ENCODE measurements at regions of chr22 and their contacts with region 1.

Region 1: GRCh38 chr22:44523981-44524759 is 26.1 kb upstream of the RTL6 start:
- DNase-seq: peak; percentile 20
- H3K4me3 ChIP-seq: no peak overlapping the region
- CTCF ChIP-seq: no peak

Region 2: DNA sequence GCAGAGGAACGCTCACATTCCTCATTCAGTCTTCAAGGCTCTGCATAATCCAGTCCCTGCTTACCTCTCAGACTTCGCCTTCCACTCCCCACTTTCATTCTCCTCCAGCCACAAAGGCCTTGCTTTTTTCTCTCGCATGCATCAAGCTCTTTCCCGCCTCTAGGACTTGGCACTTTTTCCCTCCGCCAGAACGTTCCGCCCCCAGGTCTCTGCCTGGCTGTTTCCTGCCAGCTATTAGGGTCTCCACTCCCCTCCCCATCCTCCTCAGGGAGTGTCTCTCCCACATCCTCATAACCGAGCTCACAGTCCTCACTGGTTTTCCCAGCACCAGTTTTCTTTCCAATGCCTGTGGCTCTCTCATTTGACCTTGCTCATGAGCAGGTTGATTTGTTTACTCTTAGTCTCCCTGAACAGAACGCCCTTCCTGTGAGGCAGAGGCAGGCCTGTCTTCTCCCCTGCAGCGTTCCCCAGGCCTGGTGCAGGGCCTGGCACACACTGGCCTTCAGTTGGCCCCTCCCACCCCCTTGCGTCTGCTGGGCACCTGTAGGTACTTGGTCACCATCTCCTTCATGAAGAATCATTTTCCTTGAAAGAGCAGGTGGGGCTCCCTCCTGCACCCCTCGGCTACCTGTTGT is 101.3 kb before region 1 on chr22:
- in situ Hi-C with region 1: no loop called
- DNase-seq: no peak
- H3K4me3 ChIP-seq: no peak overlapping the region
- CTCF ChIP-seq: no peak

Region 3: DNA sequence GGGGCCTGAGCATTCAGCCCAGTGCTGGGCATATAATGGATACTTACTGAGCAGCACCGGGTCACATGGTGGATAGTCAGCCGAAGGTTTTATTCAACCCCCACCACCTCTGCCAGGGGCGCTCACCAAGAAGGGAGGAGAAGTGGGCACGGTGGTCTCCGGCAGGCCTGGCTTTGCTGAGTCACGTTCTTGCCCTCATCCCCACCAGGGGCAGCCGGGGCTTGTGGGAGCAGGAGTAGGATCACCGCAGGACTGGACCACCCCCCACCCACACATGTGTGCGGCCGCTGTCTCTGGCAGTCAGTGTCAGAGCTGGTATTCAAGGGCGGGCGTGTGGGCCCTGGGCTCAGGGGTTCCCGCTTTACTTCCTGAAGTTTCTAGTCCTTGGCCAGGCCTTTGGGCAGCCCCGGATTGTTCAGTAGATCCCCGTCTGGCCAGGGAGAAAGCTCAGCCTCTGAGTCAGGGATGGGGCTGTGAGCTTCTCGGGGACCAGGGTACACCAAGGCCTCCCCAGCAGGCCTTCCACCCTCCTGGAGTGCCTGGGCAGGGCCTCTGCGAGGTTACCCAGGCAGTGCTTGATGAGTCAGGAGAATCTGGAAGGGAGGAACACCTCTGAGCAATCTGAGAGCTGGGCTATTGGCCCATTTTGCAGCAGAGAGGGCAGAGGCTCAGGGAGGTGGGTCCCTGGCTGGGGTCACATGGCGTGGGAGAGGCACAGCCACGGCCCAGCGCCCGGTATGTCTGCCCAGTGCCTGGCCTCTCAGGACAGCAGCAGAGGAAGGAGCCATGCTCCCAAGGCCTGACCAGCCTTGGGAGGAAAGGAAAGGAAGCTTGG is 86.7 kb before region 1 on chr22:
- in situ Hi-C with region 1: loop called (anchors 10 kb)
- DNase-seq: no peak
- H3K4me3 ChIP-seq: no peak overlapping the region
- CTCF ChIP-seq: no peak

Region 4: DNA sequence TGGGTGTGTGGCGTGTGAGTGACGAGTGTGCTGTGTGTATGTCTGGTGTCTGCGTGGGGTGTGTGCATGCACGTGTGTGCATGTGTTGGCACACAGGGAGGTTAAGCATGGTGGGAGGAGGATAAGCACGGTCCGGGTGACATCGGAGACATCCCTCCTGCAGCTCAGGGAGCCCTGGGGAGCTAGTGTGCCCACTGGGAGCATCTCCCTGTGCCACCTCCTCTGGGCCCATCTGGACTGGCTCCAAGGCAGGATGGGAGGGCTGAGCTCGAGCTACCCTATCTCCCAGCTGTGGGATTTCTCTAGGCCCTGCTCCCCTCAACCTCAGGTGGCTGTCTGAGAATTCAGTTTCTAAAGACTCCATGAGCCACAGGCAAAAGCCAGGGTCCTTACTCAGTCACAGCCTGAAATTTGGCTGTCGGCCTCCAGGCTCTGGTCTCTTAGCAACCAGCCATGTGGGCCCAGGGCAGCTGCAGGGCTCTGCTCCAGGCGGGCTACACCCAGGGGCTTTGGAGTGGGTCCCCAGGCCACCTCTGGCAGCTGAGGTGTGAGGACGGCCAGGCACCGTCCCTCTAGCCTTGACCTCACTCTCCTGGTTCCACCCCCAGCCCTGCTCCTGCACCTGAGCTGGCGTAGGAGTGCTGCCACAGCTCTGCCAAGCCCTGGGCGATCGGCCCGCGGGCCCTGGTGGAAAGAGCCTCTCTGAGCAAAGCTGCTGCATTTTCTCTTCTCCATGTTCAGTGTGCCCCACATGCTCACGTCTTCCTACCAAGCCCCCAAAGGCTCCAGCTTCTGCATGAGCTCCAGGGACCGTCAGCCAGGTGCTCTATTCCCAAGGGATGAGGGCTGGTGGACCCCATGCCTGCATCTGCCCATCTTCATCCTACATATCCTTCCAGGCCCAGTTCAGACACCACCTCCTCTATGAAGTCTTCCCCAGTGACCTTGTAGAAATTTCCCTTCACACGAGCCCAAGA is 65.8 kb before region 1 on chr22:
- in situ Hi-C with region 1: no loop called
- DNase-seq: no peak
- H3K4me3 ChIP-seq: no peak overlapping the region
- CTCF ChIP-seq: no peak